WTC11 (cell line): ENCODE measurements at regions of chr6 and their contacts with region 1.

Region 1: GRCh38 chr6:44275749-44276648 is 5.7 kb downstream of the TMEM151B start:
- DNase-seq: peak; percentile 60
- ATAC-seq: peak; percentile 54
- H3K4me3 Mint-ChIP-seq: no peak overlapping the region
- H3K27ac Mint-ChIP-seq: no peak overlapping the region
- H3K4me1 Mint-ChIP-seq: peaks cover 16% of the 10 kb centered on the region
- H3K27me3 Mint-ChIP-seq: peaks cover 30% of the 10 kb centered on the region
- CTCF ChIP-seq: no peak

Region 2: DNA sequence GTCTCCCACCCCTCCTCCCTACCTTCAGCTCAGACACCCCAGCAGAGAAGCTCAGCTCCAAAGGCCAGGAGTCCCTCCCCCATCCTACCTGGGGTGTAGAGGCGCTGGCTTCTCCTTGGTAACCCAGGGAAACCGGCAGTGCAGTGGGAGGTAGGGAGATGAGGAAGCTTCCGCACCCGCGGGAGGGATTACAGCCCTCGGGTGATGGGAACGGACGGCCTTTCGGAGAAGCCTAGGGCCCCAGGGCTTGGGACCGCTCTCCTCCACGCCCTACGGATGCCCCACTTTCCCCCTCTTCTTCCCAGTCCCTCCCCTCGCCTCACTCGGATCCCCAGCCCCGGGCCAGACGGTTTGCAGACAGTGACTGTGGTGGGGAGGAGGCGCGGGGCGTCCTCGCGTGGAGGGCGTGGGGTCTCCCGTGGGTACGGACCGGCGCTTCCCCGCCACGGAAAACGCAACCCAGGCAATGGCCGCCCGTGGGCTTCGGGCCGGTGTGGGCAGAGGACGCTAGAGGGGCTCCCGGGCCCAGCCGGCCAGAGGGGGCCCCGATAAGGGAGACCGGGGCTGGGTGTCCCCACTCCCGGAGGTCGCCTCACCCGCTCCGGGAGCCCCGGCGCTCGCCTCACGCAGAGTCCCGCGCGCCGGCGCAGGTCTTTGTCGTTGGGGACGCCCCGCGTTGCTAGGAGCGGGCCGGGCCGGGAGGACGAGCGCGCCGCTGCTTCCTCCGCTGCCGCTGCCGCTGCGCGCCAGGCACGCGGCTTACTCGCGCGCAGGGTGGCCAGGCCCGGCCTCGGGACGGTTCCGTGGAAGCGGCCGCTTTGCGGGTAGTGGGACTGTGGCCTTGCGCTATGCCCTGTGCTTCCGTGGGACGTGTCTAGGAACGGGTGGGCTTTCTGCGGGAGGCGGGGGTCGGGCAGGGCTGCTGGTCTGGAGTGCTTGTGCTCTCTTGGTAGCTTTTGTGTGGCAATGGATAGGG is 21.4 kb after region 1 on chr6:
- CTCF ChIA-PET with region 1: interaction called, 18 read pairs
- POLR2A ChIA-PET with region 1: interaction called, 3 read pairs
- DNase-seq: peak; percentile 67
- ATAC-seq: peak; percentile 62
- H3K4me3 Mint-ChIP-seq: peak overlapping the region; percentile 66
- H3K27ac Mint-ChIP-seq: no peak overlapping the region
- H3K4me1 Mint-ChIP-seq: peaks cover 11% of the 10 kb centered on the region
- H3K27me3 Mint-ChIP-seq: peaks cover 42% of the 10 kb centered on the region
- CTCF ChIP-seq: no peak

Region 3: DNA sequence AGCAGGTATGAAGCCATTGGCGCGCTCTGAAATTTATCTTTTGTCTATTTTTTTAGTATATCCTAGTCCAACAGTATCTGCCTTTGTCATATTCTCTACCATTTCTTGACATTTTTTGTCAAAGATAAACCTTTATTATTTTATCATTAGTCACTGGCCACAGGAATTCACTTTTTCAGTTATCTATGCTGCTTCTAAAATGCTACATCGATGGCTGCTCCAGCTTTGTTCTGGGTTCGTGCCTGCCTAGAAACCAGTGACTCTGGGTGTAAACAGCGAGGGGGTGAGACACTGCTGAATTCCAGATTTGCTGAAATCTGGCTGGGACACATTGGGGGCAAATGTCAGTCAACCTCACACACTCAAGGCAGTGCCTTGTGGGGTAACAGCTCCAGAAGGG is 304.9 kb after region 1 on chr6:
- CTCF ChIA-PET with region 1: no interaction called
- POLR2A ChIA-PET with region 1: no interaction called
- DNase-seq: no peak
- ATAC-seq: no peak
- H3K4me3 Mint-ChIP-seq: no peak overlapping the region
- H3K27ac Mint-ChIP-seq: no peak overlapping the region
- H3K4me1 Mint-ChIP-seq: no peaks in the 10 kb centered on the region
- H3K27me3 Mint-ChIP-seq: no peaks in the 10 kb centered on the region; the same call in 1 of the 2 replicates
- CTCF ChIP-seq: no peak